Psoas muscle (tissue), 8 donors: ENCODE measurements at regions of chr14 and their contacts with region 1.

Region 1: GRCh38 chr14:39368261-39368959 is 63.8 kb downstream of the FBXO33 start:
- DNase-seq: peak in 1 of 2 donors; percentile 51
- ATAC-seq: peak; percentile 64 to 87 (median 80)
- H3K4me3 ChIP-seq: no peak overlapping the region
- H3K27ac ChIP-seq: peak overlapping the region; percentile 6
- H3K4me1 ChIP-seq: peaks cover 12% of the 10 kb centered on the region
- H3K27me3 ChIP-seq: no peaks in the 10 kb centered on the region
- CTCF ChIP-seq: peak; percentile 56

Region 2: DNA sequence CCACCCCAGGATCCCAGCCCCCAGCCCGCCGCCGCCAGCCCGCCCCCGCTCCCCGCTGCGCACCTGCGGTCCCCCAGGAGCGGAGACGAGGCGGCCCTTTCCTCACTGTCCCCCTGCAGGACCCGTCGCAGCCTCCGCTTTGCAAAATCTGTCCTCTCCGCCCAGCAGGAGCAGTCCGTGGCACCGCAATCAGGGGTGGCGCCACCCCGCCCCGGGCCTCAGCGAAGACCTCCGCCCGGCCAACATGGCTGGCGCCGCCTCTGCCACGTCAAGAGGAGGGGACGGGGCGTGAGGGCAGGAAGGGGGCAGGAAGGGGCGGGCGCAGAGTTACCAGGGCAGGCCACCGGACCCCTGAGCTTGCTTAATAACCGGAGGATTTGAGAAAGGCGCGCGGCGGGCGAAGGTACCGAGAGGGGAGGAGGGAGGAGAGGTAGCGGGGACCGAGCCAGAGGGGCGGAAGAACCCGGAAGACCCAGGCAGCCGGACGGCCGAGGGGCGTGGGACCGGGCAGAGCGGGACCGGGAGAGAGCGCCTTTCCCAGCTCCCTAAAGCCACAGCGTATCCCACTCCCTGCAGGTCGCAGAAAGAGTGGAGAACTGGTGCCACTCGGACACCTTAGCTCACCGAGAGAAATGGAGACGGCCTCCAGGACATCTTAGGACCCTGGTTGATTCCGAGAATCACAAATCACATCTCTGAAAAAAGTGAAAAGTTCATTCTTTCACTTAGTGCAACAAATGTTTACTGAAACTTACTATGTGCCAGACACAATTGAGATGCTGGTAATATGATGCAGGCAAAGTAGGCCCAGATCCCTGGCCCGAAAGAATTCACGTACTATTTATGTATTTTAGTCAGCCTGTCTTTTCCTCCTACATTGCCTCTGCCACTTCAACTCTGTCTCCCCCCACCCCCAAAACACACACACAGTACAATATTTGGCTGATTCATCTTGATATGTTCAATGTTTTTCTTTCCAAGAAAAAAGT is 265.1 kb before region 1 on chr14 and contains the start of gene SEC23A:
- intact Hi-C with region 1: loop called (anchors 5 to 10 kb)
- DNase-seq: peak; percentile 92 to 95
- ATAC-seq: peak; percentile 94 to 97 (median 97)
- H3K4me3 ChIP-seq: peak within 1 kb of the TSS; percentile 95
- H3K27ac ChIP-seq: peak within 1 kb of the TSS; percentile 92
- H3K4me1 ChIP-seq: peaks cover 11% of the 10 kb centered on the region
- H3K27me3 ChIP-seq: no peaks in the 10 kb centered on the region
- CTCF ChIP-seq: no peak
- total RNA-seq, gene SEC23A: 70.7 to 84.8 (median 80.5) TPM

Region 3: DNA sequence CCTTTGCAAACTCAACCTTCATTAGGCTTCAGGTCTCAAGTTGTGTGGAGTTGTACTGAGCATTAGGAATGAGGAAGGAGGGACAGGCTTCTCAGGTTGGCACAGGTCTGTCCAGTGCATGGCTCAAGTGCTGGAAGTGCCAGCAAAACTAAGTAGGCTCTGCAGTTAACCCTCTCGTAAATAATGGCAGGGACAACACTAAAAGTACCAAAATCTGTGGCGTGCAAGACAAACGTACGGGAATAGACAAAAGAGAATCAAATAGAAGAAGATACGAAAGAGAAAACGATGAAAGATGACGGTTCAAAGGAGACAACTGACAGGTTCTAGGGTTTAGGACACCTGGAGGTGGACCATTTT is 198.9 kb before region 1 on chr14:
- intact Hi-C with region 1: loop called in 1 of 2 experiments (anchors 10 kb)
- DNase-seq: no peak
- ATAC-seq: peak in 3 of 4 donors; percentile 34 to 59 (median 56)
- H3K4me3 ChIP-seq: peak overlapping the region; percentile 86
- H3K27ac ChIP-seq: peak overlapping the region; percentile 95
- H3K4me1 ChIP-seq: peaks cover 25% of the 10 kb centered on the region
- H3K27me3 ChIP-seq: no peaks in the 10 kb centered on the region
- CTCF ChIP-seq: no peak

Region 4: DNA sequence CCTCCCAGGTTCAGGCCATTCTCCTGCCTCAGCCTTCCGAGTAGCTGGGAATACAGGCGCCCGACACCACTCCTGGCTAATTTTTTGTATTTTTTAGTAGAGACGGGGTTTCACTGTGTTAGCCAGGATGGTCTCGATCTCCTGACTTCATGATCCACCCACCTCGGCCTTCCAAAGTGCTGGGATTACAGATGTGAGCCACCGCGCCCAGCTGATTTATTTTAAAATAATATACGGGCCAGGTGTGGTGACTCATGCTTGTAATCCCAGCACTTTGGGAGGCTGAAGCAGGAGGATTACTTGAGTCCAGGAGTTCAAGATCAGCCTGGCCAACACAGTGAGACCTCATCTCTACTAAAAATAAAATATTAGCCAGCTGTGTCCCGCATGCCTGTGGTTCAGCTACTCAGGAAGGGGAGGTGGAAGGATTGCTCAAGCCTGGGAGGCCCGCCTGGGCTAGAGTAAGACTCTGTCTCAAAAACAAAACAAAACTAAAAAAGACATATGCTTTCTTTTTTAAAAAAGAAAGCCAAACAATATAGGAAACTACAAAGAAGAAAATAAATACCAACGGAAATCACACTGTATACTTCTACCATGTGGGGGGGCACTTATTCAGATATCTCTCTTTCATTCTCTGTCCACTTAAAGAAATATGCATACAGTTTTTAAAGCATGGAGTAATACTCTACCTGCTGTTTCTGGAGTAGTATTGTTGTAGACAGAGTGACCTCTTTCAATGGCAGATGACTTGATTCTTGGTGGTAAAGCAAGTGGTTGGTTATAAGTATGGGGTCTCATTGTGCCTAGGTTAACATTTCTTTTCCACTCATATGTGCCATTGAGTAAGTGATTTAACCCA is 135.6 kb before region 1 on chr14:
- intact Hi-C with region 1: loop called in 1 of 2 experiments (anchors 10 kb)
- DNase-seq: no peak
- ATAC-seq: peak; percentile 74 to 88 (median 80)
- H3K4me3 ChIP-seq: no peak overlapping the region
- H3K27ac ChIP-seq: no peak overlapping the region
- H3K4me1 ChIP-seq: peaks cover 4% of the 10 kb centered on the region
- H3K27me3 ChIP-seq: no peaks in the 10 kb centered on the region
- CTCF ChIP-seq: no peak